ENCODE measurements at regions of chr1 and their contacts with region 1.

Region 1: GRCh38 chr1:203326830-203327683 is 21.7 kb downstream of the BTG2 start:
- DNase-seq: peak; percentile 96
- H3K4me3 Mint-ChIP-seq: peak overlapping the region; percentile 75
- H3K27ac Mint-ChIP-seq: peak overlapping the region; percentile 94
- H3K4me1 Mint-ChIP-seq: peaks cover 55% of the 10 kb centered on the region
- H3K27me3 Mint-ChIP-seq: no peaks in the 10 kb centered on the region

Region 2: DNA sequence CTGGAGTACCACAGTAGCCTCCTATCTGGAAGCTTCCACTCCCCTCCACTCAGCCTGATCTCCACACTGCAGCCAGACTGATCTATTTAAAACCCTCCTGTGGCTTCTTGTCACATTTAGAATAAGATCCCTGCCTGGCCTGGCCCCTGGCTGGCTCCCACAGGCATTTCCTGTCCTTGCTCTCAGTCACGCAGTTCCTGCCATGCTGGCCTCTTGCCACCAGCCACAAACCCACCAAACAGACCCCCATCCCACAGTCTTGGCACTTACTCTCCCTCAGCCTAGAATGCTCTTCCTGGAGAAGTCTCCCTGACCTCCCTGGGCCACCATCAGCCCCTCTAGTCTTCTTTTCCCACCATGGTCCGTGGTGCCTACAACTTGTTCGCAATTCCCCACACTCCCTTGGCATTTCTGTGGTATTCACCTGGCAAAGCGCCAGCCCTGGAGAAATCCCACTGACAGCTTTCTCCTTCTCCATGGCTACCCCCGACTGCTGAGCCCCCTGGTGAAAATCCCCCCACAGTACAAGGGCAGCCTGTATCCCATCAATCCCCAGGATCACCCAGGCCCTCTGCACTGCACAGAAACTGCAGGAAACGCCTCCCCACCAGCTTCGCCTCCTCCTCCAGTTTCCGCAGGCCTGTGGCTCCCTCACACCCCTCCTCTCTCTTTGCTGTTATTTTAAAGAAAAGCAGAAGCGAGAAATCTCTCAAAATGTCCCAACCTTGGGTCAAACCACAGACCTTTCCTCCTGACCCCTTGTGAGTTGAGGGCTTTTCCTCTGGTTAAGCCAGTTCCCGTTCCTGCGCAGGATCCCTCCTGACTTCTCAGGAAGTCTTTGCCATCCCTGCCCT is 711.3 kb before region 1 on chr1:
- CTCF ChIA-PET with region 1: no interaction called
- POLR2A ChIA-PET with region 1: no interaction called
- intact Hi-C with region 1: no loop called
- DNase-seq: no peak
- H3K4me3 Mint-ChIP-seq: no peak overlapping the region
- H3K27ac Mint-ChIP-seq: no peak overlapping the region
- H3K4me1 Mint-ChIP-seq: peaks cover 12% of the 10 kb centered on the region
- H3K27me3 Mint-ChIP-seq: peaks cover 10% of the 10 kb centered on the region

Region 3: DNA sequence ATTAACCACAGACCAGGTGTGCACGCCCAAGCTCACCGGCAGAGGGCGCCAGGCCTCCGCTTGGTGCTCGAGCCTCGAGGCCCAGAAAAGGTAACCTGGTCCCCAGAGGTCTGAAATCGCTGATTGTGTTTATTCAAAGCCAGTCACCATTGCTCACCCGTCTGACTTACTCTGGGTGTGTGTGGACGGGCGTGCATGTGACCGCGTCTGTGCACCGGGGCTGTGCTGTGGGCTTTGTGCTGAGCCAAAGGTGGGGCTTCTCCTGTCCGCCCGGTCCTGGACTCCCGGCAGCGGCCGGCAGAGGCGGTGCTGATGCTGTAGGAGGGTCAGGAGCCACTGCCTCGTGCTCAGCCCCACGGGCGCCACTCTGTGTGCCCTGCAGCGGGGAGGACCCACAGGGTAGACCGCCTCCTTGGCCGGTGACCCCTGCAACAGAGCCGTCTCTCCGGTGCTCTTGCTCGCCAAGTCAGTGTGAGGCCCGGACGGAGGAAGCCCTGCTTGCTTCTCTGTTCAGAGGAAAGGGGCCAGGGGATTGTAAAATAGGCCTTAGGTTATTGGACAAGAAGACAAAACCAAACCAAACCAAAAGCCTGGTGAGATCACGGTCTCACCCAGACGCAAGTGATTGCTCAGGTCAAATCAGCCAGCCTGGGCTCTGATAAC is 53.7 kb before region 1 on chr1:
- CTCF ChIA-PET with region 1: interaction called, 847 read pairs
- POLR2A ChIA-PET with region 1: interaction called, 8 read pairs
- intact Hi-C with region 1: loop called (anchors 1 kb)
- DNase-seq: peak; percentile 95
- H3K4me3 Mint-ChIP-seq: peak overlapping the region; percentile 63
- H3K27ac Mint-ChIP-seq: peak overlapping the region; percentile 72
- H3K4me1 Mint-ChIP-seq: peaks cover 64% of the 10 kb centered on the region
- H3K27me3 Mint-ChIP-seq: no peaks in the 10 kb centered on the region